ENCODE measurements at regions of chr3 and their contacts with region 1.

Region 1: DNA sequence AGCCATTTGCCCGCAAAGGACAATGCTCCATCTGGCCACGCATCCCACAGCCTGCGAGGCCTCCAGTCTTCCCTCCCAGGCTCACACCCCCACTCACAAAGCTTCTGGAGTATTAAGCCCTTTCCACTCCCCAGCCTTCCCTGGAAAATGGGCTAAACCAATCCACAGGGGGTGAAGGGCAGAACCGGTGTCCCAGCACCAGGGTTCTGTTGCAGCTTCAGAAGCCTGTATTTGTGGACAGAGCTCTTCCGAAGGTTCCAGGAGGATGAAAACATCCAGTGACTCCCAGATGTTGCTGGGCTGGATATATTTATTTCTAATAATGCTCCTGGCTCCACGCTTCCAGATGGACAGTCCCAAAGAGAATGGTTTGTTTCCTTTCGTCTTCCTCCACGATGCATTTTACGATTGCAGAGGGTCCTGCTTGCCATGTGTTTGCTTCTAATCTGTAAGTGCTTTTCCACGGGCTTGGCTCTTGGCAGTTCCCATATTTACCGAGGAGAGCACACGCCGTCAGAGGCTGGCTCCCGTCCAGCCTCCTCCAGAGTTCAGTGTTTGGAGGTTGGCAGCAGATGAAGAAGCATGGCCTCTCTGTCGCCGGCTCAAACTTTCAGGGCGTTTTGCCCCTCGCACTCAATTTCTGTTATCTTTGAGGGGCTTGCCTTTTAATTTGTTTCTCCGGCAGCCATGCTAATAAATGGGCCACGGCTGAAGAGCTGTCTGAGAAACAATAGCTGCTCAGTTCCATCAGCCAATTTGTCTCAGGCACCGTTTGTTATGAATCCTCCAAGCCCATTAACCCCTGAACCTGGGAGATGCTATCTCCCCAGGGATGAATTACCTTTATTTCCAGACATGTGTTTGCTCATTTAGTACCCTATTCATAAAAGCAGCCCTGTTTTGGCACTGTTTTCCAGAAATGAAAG is 367.9 kb upstream of the PROK2 start:
- DNase-seq: peak; percentile 79 to 90 (median 84)
- H3K4me3 ChIP-seq: peak overlapping the region; percentile 22
- H3K27ac ChIP-seq: peak overlapping the region; percentile 59 to 90
- H3K4me1 ChIP-seq: peaks cover 7% of the 10 kb centered on the region
- H3K27me3 ChIP-seq: no peaks in the 10 kb centered on the region
- CTCF ChIP-seq: no peak
- EP300 ChIP-seq: no peak
- POLR2A ChIP-seq: no peak

Region 2: DNA sequence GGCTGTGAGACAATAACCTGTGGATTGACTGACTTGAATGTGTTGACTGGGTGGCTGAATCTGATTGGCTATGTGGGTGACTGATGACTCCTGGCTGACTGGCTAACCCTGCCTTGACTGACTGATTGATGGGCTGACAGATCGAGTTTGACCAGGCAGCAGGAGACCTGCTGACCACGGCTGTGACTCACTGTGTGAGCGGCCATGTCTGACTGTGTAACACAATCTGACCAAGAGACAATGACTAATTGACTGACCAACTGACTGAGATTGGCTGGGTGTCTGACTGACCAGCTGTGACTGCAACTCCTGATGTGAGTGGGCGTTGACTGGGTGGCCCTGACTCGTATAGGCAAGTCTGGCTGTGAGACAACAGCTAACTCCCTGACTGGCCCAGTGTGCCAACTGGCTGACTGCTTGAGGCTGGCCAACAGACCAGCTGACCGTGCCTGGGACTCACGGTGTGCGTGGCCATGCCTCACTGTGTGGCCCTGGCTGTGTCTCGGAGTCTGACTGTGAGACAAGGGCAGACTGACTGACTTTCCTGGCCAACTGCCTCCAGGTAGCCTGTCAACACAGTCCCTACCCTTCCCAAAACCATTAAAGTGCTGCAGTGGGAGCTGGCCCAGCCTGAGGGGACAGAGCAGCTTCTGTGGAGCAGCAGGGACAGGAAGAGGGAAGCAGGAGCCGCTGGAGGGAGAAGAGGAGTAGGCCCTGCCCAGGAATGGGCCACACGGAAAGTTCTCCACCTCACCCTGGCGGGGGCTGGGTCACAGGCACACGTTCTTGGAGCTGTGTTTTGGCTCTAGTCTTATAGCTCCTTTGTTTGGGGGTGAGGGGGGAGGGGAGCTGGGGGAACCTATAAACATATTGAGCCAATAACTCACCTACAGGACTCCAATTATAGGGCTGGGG is 186.6 kb after region 1 on chr3:
- intact Hi-C with region 1: loop called in 1 of 4 experiments (anchors 10 kb)
- DNase-seq: no peak
- H3K4me3 ChIP-seq: no peak overlapping the region
- H3K27ac ChIP-seq: peak overlapping the region in 1 of 2 donors; percentile 1
- H3K4me1 ChIP-seq: peaks cover 15% of the 10 kb centered on the region
- H3K27me3 ChIP-seq: no peaks in the 10 kb centered on the region
- CTCF ChIP-seq: no peak
- EP300 ChIP-seq: no peak
- POLR2A ChIP-seq: no peak

Measured in ovary (tissue), 10 donors.